ENCODE measurements at regions of chr11 and their contacts with region 1.

Region 1: DNA sequence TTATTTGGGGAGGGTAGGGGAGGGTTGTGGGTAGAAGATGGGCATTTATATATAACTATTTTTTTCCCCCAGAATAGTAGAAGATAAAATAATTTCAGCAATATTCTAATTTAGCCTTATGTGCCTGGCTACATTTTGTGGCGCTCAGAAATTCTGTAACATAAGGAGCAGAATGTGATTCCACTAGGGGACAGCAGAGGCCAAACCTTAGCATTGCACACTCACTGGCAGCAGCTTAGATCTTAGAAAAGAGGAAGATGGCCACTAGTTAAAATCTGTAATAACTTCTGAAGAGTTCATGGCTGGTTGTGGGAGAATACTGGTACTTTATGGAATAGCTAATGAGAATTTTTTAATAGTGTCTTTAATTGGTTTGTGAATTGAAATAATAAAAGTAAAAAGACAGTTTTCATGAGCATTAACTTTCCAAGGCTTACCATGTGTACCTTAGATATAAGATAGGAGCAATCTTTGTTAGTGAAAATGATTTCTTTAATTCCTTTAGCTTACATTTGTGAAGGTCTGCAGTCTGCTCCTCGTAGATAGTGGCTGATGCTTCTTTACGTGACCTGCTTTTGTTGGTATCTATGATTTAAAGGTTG is 33.1 kb downstream of the DDX10 start:
- DNase-seq: no peak
- ATAC-seq: peak; percentile 94

Region 2: DNA sequence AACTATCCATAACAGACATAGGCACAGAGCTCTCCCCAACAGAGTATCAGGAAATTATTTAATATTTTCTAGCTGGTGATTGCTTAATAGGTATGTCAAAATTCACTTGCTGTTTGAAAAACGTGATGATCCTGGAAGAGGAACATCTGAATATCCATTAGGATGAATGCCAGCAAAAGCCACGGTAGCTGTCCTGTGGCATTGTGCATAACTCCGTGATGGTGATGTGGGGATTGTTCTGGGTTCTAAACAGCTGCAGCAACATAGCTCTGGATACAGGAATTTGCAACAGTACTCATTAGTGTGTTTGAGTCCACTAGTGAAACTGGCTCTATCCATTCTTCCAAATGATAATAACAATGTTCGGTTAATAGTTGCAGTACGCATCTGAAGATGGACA is 309.4 kb before region 1 on chr11:
- intact Hi-C with region 1: no loop called
- DNase-seq: no peak
- ATAC-seq: no peak

Region 3: GRCh38 chr11:108871152-108871551 is 173.2 kb after region 1 on chr11:
- intact Hi-C with region 1: loop called (anchors 5 kb)
- DNase-seq: no peak
- ATAC-seq: no peak

Region 4: DNA sequence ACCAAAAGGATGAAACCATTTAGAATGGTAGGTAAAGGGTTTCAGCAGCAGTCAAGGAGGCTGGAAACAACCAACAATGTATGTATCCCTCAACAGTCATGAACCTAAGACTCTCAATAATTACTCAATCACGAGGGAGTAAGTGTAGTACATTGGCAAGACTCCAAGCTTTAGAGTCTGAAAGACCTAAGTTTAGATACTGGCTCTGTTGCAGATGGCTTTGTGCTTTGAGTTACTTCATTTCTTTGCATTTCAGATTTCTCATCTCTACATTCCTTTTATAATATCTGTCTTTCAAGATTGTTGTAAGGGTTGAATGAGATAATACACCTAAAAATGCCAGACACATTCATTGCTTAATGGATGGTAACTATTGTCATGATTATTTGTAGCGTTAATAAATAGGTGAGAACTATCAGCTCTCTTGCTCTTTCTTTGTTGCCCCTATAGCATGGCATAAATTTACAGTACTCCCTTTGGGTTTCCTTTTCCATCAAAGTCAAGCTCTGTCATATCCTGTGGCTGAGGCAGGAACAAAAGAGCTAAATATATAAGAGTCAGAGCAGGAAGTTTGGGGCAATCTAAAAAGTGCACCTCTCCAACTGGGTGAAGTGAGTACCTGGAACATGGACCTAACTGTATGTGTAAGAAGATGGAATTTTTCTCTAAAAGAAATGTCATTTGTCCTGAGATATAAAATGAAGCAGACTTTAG is 1167.0 kb after region 1 on chr11:
- intact Hi-C with region 1: loop called (anchors 5 kb)
- DNase-seq: no peak
- ATAC-seq: peak; percentile 59

Measured in Right ventricle myocardium superior (tissue), 1 donor.